OCI-LY7 (cell line): ENCODE measurements at regions of chr7 and their contacts with region 1.

Region 1: DNA sequence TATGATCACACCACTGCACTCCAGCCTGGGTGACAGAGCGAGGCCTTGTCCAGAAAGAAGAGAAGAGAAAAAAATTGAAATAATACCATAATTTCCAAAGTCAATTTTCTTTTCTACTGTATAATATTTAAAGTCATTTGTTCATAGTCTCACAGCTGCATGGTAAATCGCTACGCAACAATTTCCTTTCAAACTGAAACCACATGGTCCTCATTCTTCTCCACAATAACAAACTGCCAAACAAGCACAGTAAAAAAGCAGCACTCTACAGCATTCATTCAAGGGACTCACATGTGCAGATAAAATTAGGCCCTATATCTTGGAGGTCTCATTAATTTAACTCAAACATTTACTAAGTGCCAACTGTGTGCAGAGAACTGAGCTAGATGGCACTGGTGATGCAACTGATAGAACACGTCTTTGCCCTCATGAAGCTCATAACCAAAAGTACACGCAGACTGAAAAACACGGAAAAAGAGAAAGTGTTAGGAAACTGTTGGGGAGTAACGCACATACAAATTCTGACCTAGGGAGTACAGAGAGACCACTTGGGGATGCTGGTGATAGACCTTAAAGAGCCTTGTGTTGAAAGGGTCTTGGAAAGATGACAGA is 68.4 kb upstream of the SRRM3 start:
- DNase-seq: no peak
- H3K4me3 ChIP-seq: no peak overlapping the region
- H3K27ac ChIP-seq: no peak overlapping the region
- H3K4me1 ChIP-seq: no peaks in the 10 kb centered on the region
- CTCF ChIP-seq: no peak

Region 2: GRCh38 chr7:76069238-76069638 is 64.0 kb before region 1 on chr7:
- CTCF ChIA-PET with region 1: no interaction called
- POLR2A ChIA-PET with region 1: interaction called, 10 read pairs
- intact Hi-C with region 1: no loop called
- DNase-seq: no peak
- H3K4me3 ChIP-seq: no peak overlapping the region
- H3K27ac ChIP-seq: no peak overlapping the region
- H3K4me1 ChIP-seq: no peaks in the 10 kb centered on the region
- CTCF ChIP-seq: no peak